GM10248 (cell line): ENCODE measurements at regions of chr6 and their contacts with region 1.

Region 1: GRCh38 chr6:159941286-159942113 is 27.4 kb upstream of the IGF2R start:
- DNase-seq: peak; percentile 32
- CTCF ChIP-seq: peak; percentile 58

Region 2: GRCh38 chr6:159862103-159862502 is 79.4 kb before region 1 on chr6:
- CTCF ChIA-PET with region 1: interaction called, 21 read pairs
- POLR2A ChIA-PET with region 1: no interaction called
- DNase-seq: no peak
- CTCF ChIP-seq: no peak